PC-3 (cell line): ENCODE measurements at regions of chr10 and their contacts with region 1.

Region 1: DNA sequence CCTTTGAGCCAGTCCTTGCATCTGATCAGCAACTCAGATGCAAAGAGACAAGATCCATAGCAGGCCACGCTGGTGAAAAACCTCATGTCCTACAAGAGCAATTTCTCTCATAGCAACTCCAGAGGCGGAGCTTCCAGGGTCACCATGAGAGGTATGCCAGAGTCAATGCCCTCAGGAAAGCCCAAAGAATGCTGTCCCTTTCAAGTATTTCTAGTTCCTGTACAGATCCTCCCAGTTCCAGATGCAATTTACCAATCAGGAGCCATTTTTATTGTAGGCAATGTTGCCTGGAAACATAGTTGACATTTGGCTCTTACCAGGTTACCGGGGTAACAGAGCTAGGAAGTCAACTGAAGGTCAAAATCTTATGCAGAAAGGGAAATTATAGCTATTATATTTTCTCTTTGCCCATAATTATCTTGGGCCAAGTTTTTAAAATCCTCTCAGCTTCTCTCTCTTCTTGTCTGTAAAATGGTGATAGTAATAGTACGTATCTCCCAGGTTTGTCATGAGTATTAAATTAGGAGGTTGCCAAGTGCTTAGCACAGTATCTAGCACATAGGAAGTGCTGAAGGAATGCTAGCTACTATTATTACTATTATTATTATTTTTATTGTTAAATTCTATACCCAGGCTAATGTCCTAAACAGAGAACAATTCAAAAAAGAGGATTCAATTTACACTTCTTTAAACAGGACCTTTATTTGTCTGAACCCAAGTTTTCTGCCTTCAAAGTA is 46.3 kb upstream of the TM9SF3 start:
- DNase-seq: no peak
- ATAC-seq: no peak
- H3K4me3 ChIP-seq: no peak overlapping the region
- H3K27ac ChIP-seq: no peak overlapping the region
- H3K4me1 ChIP-seq: no peaks in the 10 kb centered on the region
- H3K27me3 ChIP-seq: no peaks in the 10 kb centered on the region
- CTCF ChIP-seq: no peak

Region 2: DNA sequence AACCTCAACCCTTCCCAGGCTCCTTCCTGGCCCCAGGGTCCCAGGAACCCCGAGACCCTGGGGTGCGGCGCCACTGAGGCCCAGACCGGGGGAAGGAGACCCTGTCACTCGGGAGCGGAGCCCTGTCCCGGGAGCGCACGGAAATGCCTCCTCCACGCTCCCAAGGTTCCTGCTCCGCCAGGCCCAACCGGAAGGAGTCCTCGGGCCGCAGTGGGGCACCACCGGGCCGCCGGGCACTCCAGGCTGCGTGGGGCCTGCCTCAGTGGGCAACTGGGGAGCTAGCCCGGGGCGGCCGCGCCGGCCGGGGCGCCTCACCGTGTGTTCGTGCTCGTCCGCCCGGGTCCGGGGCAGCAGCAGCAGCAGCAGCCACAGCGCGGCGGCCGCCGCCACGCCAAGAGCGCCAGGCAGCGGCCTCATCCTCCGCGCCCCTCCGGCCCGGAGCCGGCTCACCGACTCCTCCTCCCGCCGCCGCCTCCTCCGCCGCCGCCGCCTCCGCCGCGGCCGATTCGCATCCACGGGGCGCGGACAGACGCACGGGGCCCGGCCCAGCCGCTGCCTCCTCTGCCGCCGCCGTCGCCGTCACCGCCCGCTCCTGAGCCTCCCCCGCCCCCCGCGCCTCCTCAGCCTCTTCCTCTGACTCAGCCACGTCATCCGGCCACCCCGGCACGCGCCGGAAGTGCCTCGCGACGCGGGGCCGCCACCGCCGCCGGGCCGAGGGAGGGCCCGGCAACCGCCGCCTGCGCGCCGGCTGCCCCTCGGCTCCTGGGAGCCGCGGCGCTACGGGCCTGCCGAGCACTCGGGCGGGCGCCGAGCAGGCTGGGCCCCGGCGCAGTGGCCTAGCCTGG is 46.5 kb before region 1 on chr10 and contains the start of gene TM9SF3:
- CTCF ChIA-PET with region 1: interaction called, 3 read pairs
- POLR2A ChIA-PET with region 1: no interaction called
- intact Hi-C with region 1: loop called (anchors 5 kb)
- DNase-seq: peak; percentile 84
- ATAC-seq: peak; percentile 79
- H3K4me3 ChIP-seq: peak within 1 kb of the TSS; percentile 87
- H3K27ac ChIP-seq: peak within 1 kb of the TSS; percentile 70
- H3K4me1 ChIP-seq: peaks cover 19% of the 10 kb centered on the region; the same call in 1 of the 2 replicates
- H3K27me3 ChIP-seq: no peaks in the 10 kb centered on the region
- CTCF ChIP-seq: no peak
- total RNA-seq, gene TM9SF3: 39.2 and 47.0 TPM in 2 replicates